MCF 10A (cell line): ENCODE measurements at regions of chr17 and their contacts with region 1.

Region 1: GRCh38 chr17:28842282-28843012 is at the start of gene FAM222B:
- DNase-seq: peak; percentile 78
- H3K4me3 Mint-ChIP-seq: peak within 1 kb of the TSS; percentile 92
- H3K27ac Mint-ChIP-seq: peak within 1 kb of the TSS; percentile 50
- H3K4me1 Mint-ChIP-seq: peaks cover 5% of the 10 kb centered on the region
- H3K27me3 Mint-ChIP-seq: no peaks in the 10 kb centered on the region
- CTCF ChIP-seq: no peak
- total RNA-seq, gene FAM222B: 18.5 and 22.2 TPM in 2 replicates

Region 2: DNA sequence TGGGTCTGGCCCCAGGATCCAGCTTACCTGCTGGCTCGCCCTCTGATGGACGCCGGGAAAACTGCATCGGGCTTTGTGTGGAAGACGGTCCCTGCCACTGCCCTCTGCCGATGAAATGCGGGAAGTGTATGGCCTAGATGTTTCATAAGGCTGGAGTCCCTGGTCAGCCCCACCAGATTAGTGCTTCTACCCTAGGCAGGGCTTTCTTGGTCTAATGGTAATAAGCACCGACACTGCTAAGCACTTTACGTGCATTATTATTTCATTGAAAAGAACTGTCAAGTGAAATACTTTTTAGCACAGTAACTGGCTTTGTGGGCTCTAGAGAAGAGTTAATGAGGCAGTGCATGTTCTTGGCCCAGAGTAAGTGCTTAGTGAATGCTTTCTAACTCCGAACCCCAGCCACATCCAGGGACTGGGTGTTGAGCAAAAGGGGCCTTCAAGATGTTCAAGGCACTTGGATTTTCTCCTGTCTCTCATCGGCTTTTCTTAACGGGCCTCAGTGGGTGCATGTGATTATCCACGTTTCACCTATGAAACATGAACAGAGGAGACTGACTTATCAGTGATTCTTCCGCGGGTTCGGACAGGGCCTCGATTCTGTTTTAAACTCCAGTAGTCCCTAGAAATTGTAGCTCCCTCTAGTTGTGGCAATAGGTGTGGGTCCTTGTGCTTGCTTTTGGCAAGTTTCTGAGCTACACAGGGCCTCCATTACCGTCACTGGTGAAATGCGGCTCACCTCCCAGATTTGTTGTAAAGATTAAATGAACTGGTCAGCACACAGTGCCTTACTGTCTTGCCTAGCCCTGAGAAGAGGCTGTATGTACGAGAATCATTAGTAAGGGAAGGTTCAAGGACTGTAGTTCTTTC is 92.0 kb before region 1 on chr17:
- CTCF ChIA-PET with region 1: interaction called, 10 read pairs
- POLR2A ChIA-PET with region 1: interaction called, 5 read pairs
- intact Hi-C with region 1: no loop called
- DNase-seq: peak; percentile 94
- H3K4me3 Mint-ChIP-seq: no peak overlapping the region
- H3K27ac Mint-ChIP-seq: no peak overlapping the region
- H3K4me1 Mint-ChIP-seq: peaks cover 13% of the 10 kb centered on the region
- H3K27me3 Mint-ChIP-seq: no peaks in the 10 kb centered on the region
- CTCF ChIP-seq: peak; percentile 99

Region 3: GRCh38 chr17:28818819-28819221 is 23.6 kb before region 1 on chr17:
- CTCF ChIA-PET with region 1: interaction called, 5 read pairs
- POLR2A ChIA-PET with region 1: interaction called, 20 read pairs
- intact Hi-C with region 1: no loop called
- DNase-seq: no peak
- H3K4me3 Mint-ChIP-seq: no peak overlapping the region
- H3K27ac Mint-ChIP-seq: no peak overlapping the region
- H3K4me1 Mint-ChIP-seq: peaks cover 10% of the 10 kb centered on the region
- H3K27me3 Mint-ChIP-seq: no peaks in the 10 kb centered on the region
- CTCF ChIP-seq: no peak

Region 4: DNA sequence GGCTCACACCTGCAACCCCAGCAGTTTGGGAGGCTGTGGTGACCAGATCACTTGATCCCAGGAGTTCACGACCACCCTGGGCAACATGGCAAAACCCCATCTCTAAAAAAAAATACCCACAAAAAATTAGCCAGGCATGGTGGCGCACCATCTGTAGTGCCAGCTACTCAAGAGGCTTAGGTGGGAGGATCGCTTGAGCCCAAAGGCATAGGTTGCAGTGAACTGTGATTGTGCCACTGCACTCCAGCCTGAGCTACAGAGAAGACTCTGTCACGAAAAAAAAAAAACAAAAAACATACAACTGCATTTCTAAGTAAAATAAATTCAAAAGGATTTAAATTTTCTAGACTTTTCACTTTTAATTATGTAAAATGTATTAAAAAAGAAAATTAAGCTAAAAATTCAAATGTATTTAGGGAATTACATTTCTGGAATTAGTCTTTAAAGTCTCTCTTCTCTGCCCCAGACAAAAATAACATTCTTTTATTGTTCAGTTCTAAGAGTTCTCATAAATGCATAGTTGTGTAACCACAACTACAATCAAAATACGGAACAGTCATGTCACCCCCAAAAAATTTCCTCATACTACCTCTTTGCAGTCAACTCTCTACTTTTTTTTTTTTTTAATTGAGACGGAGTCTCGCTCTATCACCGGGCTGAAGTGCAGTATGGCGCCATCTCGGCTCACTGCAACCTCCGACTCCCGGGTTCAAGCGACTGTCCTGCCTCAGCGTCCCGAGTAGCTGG is 14.0 kb before region 1 on chr17:
- CTCF ChIA-PET with region 1: interaction called, 5 read pairs
- POLR2A ChIA-PET with region 1: interaction called, 12 read pairs
- intact Hi-C with region 1: no loop called
- DNase-seq: peak; percentile 22
- H3K4me3 Mint-ChIP-seq: no peak overlapping the region
- H3K27ac Mint-ChIP-seq: peak overlapping the region; percentile 32
- H3K4me1 Mint-ChIP-seq: peaks cover 9% of the 10 kb centered on the region
- H3K27me3 Mint-ChIP-seq: no peaks in the 10 kb centered on the region
- CTCF ChIP-seq: no peak